ENCODE measurements at regions of chr7 and their contacts with region 1.

Region 1: DNA sequence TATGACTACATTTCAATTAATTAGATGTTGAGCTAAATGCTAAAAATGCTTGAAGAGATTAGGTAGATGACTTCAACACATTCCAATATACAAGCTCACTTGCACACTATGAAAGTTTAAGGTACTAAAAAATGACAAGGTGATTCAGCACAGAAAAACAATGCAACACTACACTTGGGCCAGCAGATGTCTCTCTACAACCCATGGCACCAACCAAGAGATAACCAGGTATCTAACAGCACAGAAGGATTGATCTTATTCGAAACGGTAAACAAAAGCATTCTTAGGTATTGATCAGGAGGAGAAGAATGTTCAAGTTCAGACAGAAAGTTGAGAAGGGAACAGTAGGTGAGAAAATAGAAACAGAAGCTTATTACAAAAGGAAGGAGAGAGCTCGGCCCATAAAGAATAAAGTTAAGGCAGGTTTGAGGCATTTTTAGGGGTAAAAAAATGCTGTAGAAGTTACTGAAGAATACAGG is 248.2 kb upstream of the KLF14 start:
- DNase-seq: no peak
- ATAC-seq: peak; percentile 78
- H3K4me3 Mint-ChIP-seq: no peak overlapping the region
- H3K27ac Mint-ChIP-seq: no peak overlapping the region
- H3K4me1 Mint-ChIP-seq: peaks cover 46% of the 10 kb centered on the region
- H3K27me3 Mint-ChIP-seq: no peaks in the 10 kb centered on the region

Region 2: DNA sequence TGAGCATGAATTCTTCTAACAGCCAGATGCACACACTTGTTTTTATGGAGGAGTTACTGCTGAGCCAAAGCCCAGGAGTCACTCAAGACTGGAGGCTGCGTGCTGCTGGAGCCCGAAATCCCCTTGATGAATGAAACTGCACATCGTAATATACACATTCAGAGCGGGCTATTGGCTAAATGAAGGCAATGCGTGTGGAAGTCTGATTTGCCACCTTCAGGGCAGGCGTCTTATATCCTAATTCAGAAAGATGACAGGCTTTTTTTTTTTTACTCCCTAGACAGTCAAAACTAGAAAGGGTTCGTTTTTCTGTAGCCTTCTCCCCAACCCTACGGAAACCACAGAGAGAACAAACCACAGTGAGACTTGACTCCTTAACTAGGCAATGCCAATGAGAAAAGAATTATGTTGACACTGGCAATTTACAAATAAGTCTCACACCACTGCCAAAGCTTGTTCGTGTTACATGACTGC is 21.0 kb before region 1 on chr7:
- CTCF ChIA-PET with region 1: interaction called, 25 read pairs
- DNase-seq: peak; percentile 93
- ATAC-seq: peak; percentile 82
- H3K4me3 Mint-ChIP-seq: peak overlapping the region; percentile 94
- H3K27ac Mint-ChIP-seq: peak overlapping the region; percentile 100
- H3K4me1 Mint-ChIP-seq: peaks cover 48% of the 10 kb centered on the region
- H3K27me3 Mint-ChIP-seq: no peaks in the 10 kb centered on the region

Region 3: DNA sequence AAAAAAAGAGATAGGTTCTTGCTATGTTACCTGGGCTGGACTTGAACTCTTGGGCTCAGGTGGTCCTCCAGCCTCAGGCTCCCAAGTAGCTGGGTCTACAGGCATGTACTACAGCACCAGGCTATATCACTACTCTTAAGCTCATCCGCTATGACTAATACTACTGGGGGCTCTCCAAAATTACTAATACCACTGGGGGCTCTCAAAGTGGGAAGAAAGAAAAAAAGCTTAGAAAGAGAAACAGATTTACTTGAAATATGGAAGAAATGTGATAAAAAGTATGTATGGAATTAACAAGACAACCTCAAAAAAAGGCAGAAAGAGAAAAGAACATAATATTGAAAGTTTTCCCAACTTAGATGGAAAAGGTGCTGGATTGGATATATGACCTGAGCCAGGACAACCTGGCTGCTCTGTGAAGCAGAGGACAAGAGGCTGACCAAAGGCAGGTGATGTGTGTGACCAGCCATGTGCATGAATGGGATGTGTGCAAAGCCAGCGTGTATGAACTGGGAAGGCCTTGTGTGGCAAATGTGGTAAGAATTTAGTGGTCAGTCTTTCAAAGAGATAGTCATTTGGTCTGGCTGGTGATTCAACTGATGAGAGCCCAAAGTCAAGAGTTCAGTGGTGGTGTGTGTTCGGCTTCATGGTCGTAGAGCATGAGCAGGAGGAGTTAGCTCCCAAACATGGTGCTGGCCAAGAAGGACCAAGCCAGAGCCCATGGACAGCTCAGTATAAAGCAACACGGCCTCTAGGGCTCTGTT is 15.8 kb before region 1 on chr7:
- CTCF ChIA-PET with region 1: interaction called, 25 read pairs
- DNase-seq: peak; percentile 75
- ATAC-seq: peak; percentile 31
- H3K4me3 Mint-ChIP-seq: peak overlapping the region; percentile 7
- H3K27ac Mint-ChIP-seq: peak overlapping the region; percentile 81
- H3K4me1 Mint-ChIP-seq: peaks cover 71% of the 10 kb centered on the region
- H3K27me3 Mint-ChIP-seq: no peaks in the 10 kb centered on the region

Region 4: DNA sequence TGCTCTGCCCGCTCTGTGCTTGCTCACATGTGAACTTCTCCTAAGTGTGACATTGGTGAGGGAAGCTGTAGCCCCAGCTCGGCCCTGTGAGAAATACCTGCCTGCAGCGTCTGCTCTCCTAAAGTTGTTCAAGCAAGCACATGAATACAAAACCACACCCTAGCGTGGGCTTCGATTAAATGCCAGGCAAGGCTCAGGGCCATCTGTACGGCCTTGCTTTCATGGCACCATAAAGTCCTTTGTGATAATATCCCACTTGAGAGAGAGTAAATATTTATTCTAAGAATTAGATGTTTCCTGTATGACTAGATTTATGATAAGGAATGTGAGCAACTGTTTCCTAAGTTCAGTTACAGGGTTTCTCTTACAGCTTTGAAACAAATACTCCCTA is 14.6 kb after region 1 on chr7:
- CTCF ChIA-PET with region 1: interaction called, 41 read pairs
- DNase-seq: no peak
- ATAC-seq: peak; percentile 62
- H3K4me3 Mint-ChIP-seq: peak overlapping the region; percentile 20
- H3K27ac Mint-ChIP-seq: peak overlapping the region; percentile 77
- H3K4me1 Mint-ChIP-seq: peaks cover 60% of the 10 kb centered on the region
- H3K27me3 Mint-ChIP-seq: no peaks in the 10 kb centered on the region

Region 5: DNA sequence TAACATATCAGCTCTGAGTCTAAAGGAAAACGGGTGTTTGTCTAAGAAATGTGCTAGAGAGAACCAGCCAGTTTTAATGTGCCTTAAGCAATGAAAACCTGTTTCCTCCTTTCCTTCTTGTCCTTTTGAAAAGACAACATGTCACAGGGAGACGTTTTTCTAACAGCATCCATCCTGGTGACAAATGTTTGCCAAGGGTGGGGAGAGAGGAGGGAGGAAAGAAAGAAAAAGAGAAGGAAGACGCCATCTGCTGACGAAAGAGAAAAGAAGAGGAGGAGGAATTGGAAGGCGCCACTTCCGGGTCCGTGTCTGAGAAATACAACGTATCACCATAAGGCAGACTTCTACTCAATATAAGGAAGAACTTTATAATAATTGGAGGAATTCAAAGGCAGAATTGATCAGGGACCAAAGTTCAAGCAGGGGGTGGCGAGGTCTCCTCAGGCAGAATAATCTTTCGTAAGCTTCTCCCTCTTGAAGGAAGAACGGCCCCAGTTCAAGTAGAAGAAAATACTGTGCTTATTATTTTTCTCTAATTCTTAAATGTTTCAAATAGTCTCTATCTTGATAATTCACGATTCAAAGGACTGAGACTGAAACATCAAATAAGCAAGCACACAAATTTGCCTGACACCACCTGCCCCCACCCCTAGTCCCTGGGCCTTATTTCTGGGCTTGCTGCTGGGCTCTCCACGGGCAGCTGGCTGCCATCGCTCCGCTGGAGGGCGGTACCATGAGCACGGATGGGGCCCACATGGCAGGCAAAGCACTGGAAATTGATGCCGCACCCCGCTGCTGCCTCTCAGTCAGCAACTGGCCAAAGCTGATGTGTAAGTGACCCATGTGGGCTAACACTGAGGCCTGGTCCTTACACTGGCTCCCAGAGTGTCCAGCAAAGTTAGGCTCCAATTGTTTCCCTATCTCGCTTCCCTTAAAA is 25.5 kb after region 1 on chr7:
- CTCF ChIA-PET with region 1: interaction called, 28 read pairs
- DNase-seq: peak; percentile 81
- ATAC-seq: peak; percentile 58
- H3K4me3 Mint-ChIP-seq: peak overlapping the region; percentile 49
- H3K27ac Mint-ChIP-seq: peak overlapping the region; percentile 93
- H3K4me1 Mint-ChIP-seq: peaks cover 80% of the 10 kb centered on the region
- H3K27me3 Mint-ChIP-seq: no peaks in the 10 kb centered on the region

Region 6: DNA sequence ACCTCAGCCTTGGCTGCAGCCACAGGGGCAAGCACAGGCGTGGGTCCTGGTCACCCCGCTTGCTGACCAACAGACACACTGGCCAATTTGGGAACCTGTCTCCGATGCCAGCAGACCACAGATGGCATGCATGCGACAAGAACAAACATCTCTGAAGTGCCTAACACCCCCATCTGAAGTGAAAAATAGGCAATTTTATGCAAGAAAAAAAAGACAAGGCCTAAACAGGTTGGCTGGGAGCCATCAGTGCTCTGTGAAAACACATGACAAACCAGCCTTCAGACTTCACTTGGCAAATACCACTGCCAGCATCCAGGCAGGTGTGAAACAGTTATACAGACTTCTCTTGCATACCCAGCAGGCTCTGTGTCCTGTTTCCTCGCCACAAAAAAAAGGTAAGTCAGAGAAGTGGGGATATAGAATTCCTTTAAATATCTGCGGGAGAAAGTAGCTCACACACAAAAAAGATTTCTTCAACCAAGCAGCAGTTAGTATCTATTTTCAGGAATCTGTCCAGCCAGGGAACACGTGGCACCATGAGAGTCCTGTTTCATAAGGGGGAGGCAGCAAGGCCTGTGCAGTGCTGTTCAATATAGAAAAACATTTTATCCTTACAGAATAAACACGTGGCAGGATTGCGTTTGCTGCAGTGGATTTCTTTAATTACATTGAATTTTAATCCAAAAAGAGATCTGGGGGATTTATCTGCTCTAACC is 52.1 kb after region 1 on chr7:
- CTCF ChIA-PET with region 1: interaction called, 25 read pairs
- DNase-seq: no peak
- ATAC-seq: no peak
- H3K4me3 Mint-ChIP-seq: no peak overlapping the region
- H3K27ac Mint-ChIP-seq: peak overlapping the region; percentile 21
- H3K4me1 Mint-ChIP-seq: peaks cover 77% of the 10 kb centered on the region
- H3K27me3 Mint-ChIP-seq: no peaks in the 10 kb centered on the region

Region 7: DNA sequence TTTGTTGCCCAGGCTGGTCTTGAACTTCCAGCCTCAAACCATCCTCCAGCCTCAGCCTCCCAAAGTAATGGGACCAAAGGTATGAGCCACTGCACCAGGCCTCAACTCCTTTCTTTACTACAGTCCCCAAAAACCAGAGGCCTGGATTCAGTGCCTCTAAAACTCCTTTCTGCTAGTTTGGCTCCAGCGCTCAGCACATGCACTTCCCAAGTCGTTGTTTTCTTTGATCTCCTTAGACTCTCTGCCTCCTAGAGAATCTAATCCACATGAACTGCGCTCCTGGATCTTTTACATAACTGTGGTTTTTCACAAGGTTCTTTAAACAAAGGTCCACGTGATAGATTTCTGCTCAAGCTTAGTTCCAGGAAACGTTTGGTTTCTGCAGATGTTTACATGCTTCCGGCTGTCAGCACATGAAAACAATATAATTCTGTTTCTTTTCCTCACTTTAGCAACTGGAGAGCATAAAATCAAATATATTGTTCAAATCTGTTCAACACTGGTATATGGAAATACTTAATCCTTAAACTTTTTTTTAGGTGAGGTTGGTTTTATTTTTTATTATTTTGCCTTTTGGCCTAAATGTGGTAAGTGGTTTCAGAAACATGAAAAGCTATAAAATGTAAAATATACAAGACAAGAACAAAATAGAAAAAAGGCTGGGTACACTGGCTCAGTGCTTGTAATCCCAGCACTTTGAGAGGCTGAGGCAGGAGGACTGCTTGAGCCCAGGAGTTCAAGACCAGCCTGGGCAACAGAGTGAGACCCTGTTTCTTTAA is 75.0 kb after region 1 on chr7:
- CTCF ChIA-PET with region 1: no interaction called
- DNase-seq: peak; percentile 51
- ATAC-seq: peak; percentile 74
- H3K4me3 Mint-ChIP-seq: peak overlapping the region; percentile 53
- H3K27ac Mint-ChIP-seq: peak overlapping the region; percentile 80
- H3K4me1 Mint-ChIP-seq: peaks cover 43% of the 10 kb centered on the region
- H3K27me3 Mint-ChIP-seq: no peaks in the 10 kb centered on the region